ENCODE measurements at regions of chr12 and their contacts with region 1.

Region 1: GRCh38 chr12:59087077-59087673 is 166.9 kb upstream of the LRIG3 start:
- DNase-seq: no peak
- ATAC-seq: no peak

Region 2: DNA sequence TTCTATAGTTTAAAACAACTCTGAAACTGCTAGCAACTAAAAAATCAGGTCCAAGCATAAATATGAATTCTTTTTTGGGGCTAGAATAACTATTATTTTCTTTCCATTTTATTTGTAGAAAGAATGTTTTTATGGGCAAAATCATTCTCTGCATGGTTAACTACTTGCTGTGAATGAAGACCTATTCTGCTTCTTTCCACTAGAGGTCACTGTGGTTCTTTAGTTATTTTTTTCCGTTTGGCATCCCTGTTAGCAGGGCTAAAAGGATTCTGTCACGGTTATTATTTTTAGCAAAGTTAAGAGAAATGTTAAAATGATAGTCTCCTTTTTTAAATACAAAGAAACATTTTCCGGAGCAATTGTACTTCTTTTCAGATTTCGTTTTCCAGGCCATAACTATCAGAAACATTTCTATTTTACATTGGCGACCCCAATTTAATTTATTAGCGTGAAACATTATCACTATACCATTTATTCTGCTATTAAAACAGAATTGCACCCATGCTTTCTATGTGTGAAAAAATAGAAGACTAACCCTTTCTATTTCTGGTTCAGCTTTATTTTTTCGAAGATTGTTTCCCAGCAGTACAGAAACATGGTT is 741.0 kb before region 1 on chr12:
- intact Hi-C with region 1: loop called (anchors 5 kb)
- DNase-seq: no peak
- ATAC-seq: no peak

Region 3: GRCh38 chr12:58540480-58541299 is 546.5 kb before region 1 on chr12:
- intact Hi-C with region 1: loop called (anchors 5 kb)
- DNase-seq: peak; percentile 75
- ATAC-seq: peak; percentile 90

Region 4: GRCh38 chr12:58833853-58834252 is 253.3 kb before region 1 on chr12:
- intact Hi-C with region 1: loop called (anchors 10 kb)
- DNase-seq: no peak
- ATAC-seq: no peak